ENCODE measurements at regions of chr5 and their contacts with region 1.

Region 1: DNA sequence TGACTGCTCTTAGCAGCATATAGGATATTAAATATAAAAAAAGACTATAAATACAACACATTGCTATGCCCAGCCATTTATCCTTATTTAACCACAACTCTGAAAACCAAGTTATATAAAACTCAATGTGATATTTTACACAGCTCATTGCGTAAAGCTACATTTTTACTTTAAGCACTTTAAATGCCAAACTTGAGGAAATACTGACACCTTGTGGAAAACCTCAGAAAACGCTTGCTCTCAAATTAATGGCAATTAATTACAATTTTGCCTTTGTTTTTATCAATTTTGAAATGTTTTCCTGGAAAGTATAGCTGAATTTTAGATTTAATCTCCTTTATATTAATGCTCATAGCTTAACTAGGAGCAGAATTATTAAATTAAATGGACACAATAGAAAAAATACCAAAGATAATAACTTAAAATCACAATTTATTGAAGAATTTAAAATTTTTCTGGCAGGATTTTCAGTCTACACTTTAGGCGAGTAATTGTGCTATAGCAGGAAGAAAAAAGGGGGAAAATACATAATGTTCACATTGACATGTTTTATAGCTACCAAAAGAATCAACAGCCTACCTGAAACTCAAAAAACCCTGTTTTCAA is 25.2 kb upstream of the PLAC8L1 start:
- DNase-seq: no peak
- H3K4me3 Mint-ChIP-seq: no peak overlapping the region
- H3K27ac Mint-ChIP-seq: no peak overlapping the region
- H3K4me1 Mint-ChIP-seq: peaks cover 6% of the 10 kb centered on the region
- H3K27me3 Mint-ChIP-seq: no peaks in the 10 kb centered on the region

Region 2: GRCh38 chr5:145697251-145697990 is 433.1 kb before region 1 on chr5:
- intact Hi-C with region 1: loop called (anchors 1 kb)
- DNase-seq: no peak
- H3K4me3 Mint-ChIP-seq: no peak overlapping the region
- H3K27ac Mint-ChIP-seq: no peak overlapping the region
- H3K4me1 Mint-ChIP-seq: no peaks in the 10 kb centered on the region
- H3K27me3 Mint-ChIP-seq: no peaks in the 10 kb centered on the region

Region 3: GRCh38 chr5:145811834-145812625 is 318.5 kb before region 1 on chr5:
- intact Hi-C with region 1: no loop called
- DNase-seq: no peak
- H3K4me3 Mint-ChIP-seq: no peak overlapping the region
- H3K27ac Mint-ChIP-seq: no peak overlapping the region
- H3K4me1 Mint-ChIP-seq: no peaks in the 10 kb centered on the region
- H3K27me3 Mint-ChIP-seq: no peaks in the 10 kb centered on the region

Region 4: DNA sequence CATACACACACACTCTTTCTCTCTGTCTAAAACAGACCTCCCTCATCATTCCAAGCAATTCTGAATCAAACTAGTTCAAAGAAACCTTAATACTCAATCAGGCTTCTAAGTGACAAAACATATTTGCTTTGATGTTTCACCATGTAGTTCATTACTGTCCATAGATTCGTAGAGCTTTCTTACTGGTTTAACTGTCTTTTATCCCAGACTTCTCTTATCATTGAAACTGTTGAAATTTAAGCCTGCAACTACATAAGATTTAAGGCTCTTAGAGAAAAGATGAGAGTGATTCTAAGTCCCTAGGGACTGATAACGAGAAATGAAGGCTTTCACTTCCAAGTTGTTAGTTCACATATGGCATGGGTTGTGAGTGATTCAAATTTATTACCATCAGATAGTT is 14.2 kb before region 1 on chr5:
- intact Hi-C with region 1: loop called (anchors 1 kb)
- DNase-seq: no peak
- H3K4me3 Mint-ChIP-seq: no peak overlapping the region
- H3K27ac Mint-ChIP-seq: no peak overlapping the region
- H3K4me1 Mint-ChIP-seq: no peaks in the 10 kb centered on the region
- H3K27me3 Mint-ChIP-seq: no peaks in the 10 kb centered on the region